ENCODE measurements at regions of chr1 and their contacts with region 1.

Region 1: DNA sequence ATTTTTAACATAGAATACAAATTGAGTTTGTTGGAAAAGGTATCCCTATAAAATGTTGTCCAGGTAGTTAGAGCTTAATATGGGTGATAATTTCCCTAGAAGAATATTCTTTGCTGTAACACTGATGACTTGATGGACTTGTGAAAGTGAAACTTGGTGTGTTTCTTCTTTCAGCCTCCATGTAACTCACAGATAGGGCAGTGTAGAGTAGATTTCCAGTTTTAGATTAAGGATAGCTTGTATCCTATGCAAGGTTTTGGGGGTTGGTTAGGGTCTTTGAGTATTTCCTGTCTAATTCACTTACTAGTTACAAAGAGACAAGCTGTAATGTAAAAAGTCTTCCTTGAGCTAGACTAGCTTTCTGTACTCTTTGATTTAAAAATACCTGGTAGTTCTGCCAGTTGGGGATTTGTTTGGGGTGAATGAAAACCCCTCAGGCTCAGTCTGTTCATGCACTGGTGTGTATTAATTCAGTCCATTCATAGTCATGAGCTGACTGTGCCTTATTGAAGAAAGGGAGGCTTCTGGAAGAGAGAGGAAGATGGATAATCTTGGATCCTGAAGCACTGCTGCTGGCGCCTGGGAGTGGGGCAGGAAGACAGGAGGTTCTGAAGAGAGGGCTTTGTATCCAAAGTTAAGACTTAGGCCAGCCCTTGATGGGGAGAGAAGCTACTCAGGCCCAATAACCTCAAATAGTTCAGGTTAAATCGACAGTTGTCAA is 83.6 kb downstream of the CAMTA1 start:
- DNase-seq: no peak
- ATAC-seq: no peak
- H3K4me3 ChIP-seq: no peak overlapping the region
- H3K27ac ChIP-seq: peak overlapping the region in 1 of 2 donors; percentile 16
- H3K4me1 ChIP-seq: peaks cover 5 to 11% of the 10 kb centered on the region in 2 donors
- H3K27me3 ChIP-seq: no peaks in the 10 kb centered on the region

Region 2: DNA sequence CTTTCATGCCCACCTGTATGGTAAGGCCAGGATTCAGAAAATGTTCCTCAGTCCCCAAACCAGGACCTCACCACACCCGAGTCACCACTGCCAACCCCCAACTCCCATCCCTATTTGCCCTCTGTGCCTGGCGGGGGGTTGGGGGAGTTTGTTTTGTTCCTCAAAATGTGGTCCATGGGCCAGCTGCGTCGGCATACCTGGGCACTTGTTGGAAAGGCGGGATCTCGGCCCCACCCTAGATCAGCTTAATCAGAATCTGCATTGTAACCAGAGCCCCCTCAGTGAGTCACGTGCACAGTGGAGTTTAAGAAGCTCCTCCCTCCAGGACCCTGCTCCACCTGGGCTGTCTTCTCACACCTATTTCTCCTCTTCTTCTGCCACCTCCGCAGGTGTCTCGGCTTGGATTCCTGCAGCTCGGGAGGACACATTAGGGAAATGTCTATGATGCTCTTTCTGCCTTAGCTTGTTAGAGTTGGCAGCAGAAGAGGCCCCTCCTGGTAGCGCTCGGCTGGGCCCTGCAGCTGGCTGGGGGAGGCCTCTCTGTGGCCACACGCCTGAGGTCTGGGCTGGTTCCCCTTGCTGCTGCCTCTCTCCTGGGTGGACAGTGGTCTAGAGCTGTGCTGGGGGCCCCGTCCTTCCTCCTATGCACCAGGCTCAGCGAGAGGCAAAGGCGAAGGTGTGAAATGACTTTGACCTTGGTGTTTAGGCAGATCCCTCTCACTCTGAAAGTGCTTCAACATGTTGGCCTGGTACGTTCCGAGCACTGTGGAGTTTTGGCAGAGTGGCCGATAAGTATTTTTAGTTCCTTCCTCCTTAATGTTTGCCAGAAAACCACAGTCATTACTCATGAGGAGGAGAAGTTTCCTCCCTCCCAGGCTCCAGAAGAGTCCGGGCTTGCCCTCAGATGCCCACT is 125.4 kb before region 1 on chr1:
- intact Hi-C with region 1: loop called in 1 of 2 experiments (anchors 5 kb)
- DNase-seq: peak; percentile 78 to 80
- ATAC-seq: peak; percentile 90
- H3K4me3 ChIP-seq: no peak overlapping the region
- H3K27ac ChIP-seq: peak overlapping the region in 1 of 2 donors; percentile 66
- H3K4me1 ChIP-seq: no peaks in the 10 kb centered on the region
- H3K27me3 ChIP-seq: no peaks in the 10 kb centered on the region

Region 3: GRCh38 chr1:6848816-6849215 is 20.0 kb before region 1 on chr1:
- intact Hi-C with region 1: loop called in 1 of 2 experiments (anchors 2 kb)
- DNase-seq: no peak
- ATAC-seq: no peak
- H3K4me3 ChIP-seq: no peak overlapping the region
- H3K27ac ChIP-seq: no peak overlapping the region
- H3K4me1 ChIP-seq: peaks cover 0 to 2% of the 10 kb centered on the region in 2 donors
- H3K27me3 ChIP-seq: no peaks in the 10 kb centered on the region

Region 4: DNA sequence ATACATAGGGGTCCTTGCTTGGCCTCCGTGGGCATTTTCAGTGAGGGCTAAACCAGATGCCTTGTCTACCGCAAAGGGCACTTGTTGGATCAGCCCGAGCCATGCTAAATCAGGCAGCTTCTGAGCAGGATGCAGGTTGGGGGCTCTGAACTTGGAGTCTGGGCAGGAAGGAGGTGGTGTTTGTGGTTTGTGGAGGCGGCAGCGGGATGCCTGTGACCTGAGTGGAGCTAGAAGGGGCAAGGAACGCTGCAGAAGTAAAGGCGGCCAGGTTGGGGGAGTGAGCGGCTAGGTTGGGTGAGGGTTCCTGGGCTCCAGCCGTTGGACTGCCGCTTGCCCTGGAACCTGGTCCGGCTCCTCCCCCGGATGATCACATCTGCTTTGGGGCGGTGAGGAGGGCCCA is 100.3 kb after region 1 on chr1:
- intact Hi-C with region 1: no loop called
- DNase-seq: peak in 1 of 2 donors; percentile 42
- ATAC-seq: no peak
- H3K4me3 ChIP-seq: no peak overlapping the region
- H3K27ac ChIP-seq: no peak overlapping the region
- H3K4me1 ChIP-seq: no peaks in the 10 kb centered on the region
- H3K27me3 ChIP-seq: no peaks in the 10 kb centered on the region

Region 5: DNA sequence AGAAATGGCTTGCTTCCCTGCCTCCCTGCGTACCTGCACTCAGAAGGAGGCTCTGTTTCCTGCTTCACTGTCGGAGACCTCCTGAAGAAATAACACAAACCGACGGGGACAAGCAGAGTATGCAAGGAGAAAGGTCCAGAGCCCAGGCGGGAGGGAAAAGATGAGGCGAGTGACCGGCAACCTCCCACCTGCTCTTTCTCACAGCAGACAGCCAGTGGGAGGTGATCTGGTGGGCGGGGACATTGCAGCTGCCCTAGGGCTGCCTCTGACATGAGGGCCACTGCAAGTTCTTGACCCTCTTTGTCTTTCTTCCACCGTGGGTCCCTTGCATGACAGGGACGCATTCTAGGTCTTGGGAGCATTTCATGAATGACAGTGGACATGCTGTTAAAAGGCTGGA is 284.6 kb after region 1 on chr1:
- intact Hi-C with region 1: no loop called
- DNase-seq: no peak
- ATAC-seq: no peak
- H3K4me3 ChIP-seq: no peak overlapping the region
- H3K27ac ChIP-seq: no peak overlapping the region
- H3K4me1 ChIP-seq: no peaks in the 10 kb centered on the region
- H3K27me3 ChIP-seq: no peaks in the 10 kb centered on the region

Region 6: GRCh38 chr1:7278827-7279765 is 410.3 kb after region 1 on chr1:
- intact Hi-C with region 1: no loop called
- DNase-seq: no peak
- ATAC-seq: no peak
- H3K4me3 ChIP-seq: no peak overlapping the region
- H3K27ac ChIP-seq: no peak overlapping the region
- H3K4me1 ChIP-seq: no peaks in the 10 kb centered on the region
- H3K27me3 ChIP-seq: no peaks in the 10 kb centered on the region

Measured in aorta (tissue), 5 donors.